HEK293 (cell line): ENCODE measurements at regions of chr11 and their contacts with region 1.

Region 1: GRCh38 chr11:112355726-112356125 is 95.1 kb upstream of the PLET1 start:
- H3K4me3 ChIP-seq: no peak overlapping the region
- H3K27ac ChIP-seq: no peak overlapping the region
- H3K4me1 ChIP-seq: no peaks in the 10 kb centered on the region
- CTCF ChIP-seq: no peak

Region 2: DNA sequence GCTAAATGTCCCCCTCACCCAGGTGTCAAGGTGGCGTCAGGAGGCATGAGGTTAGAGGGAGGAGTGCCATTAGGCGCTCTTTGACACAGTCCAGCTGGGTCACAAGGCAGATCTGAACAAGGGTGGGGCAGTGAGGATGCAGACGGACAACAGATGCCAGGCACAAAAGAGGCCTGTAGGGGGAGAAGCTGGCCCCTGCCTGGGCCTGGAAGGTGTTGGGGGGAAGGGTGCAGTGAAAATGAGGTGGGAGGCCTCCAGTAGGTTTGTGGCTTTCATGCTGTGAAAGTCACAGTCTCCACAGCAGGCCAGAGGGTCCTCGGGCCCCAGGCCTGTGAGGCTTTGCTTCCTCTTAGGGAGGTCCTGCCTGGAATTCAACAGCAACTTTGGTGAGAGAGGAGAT is 10.0 kb before region 1 on chr11:
- CTCF ChIA-PET with region 1: interaction called, 17 read pairs
- POLR2A ChIA-PET with region 1: no interaction called
- H3K4me3 ChIP-seq: no peak overlapping the region
- H3K27ac ChIP-seq: no peak overlapping the region
- H3K4me1 ChIP-seq: peaks cover 3% of the 10 kb centered on the region
- CTCF ChIP-seq: no peak